Lower leg skin (tissue), 4 donors: ENCODE measurements at regions of chr1 and their contacts with region 1.

Region 1: DNA sequence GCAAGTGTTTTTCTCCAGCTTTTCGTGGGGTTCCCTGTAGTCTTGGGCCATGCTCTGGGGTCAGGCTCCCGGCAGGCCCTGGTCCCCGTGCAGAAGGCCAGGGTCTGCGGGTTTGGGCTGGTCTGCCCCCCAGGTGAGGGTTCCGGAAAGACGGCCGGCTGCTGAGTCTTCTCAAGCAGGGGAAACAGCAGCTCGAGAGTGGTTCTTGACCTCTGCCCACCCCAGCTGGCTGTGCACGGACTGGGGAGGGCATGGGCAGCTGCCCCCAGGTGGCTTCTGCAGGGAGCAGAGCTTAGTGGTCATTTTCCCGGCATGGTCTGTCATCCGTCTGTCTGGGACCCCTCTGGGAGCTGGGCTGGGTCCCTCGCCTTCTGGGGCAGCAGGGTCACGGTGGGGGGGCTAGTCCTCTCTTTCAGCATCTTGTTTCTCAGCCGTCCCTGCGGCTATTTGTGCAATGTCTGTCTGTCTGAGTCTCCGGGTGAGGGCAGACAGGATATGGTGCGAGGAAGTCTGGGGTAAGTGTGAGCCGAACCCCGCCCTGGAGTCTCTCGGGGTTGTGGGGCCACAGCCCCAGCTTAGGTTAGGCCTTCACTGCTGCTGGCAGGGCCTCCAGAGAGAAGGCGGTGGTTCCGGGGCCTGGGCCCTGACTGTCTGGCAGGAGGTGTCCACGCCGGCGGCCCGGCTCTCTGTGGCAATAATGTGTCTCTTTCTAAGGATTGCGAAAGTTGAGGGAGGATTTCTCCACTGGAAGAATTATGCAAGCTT is 6.1 kb downstream of the SKI start:
- DNase-seq: peak; percentile 92 to 98
- H3K4me3 ChIP-seq: no peak overlapping the region
- CTCF ChIP-seq: no peak
- POLR2A ChIP-seq: no peak

Region 2: DNA sequence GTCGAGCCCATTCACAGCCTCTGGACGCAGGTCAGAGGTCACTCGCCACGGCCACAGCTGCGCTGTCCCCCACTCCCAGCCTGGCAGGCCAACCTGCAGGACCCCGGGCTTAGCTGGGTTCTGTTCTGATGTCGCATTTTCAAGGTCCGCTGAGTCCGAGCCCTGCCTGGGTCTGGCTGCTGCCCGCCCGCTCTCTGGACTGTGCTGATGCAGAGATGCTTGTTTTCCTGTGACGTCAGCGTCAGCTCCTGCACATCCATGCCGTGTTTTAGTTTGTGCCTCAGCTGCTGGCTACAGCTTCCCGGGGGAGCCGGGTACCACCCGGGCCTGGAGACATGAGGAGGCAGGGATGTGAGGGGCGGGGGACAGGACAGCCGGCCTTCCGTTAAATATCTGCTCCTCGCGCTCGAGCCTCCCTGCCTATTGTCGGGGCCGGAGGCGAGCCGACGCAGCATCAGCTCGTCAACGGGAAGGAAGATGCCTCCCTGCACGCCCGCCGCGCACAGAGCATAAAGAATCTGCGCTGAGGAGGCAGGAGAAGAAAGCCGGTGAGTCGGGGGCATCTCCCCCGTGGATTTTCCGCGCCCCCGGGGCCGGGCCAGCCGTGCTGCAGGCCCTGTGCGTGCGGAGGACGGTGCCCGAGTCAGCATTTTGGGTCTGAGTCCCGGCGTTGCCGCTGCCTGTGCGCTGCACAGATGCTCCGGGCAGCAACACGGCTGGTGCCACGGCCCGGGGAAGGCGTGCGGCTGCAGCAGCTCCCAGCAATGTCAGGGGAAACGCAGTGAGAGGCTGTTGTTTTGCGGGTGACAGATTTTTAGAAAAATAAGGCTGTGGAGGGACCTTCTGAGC is 160.6 kb before region 1 on chr1:
- intact Hi-C with region 1: no loop called
- DNase-seq: no peak
- H3K4me3 ChIP-seq: no peak overlapping the region
- CTCF ChIP-seq: no peak
- POLR2A ChIP-seq: no peak

Region 3: GRCh38 chr1:2300851-2301606 is 66.8 kb after region 1 on chr1:
- intact Hi-C with region 1: loop called (anchors 10 kb)
- DNase-seq: peak; percentile 83 to 96
- H3K4me3 ChIP-seq: no peak overlapping the region
- CTCF ChIP-seq: no peak
- POLR2A ChIP-seq: no peak